ENCODE measurements at regions of chr1 and their contacts with region 1.

Region 1: GRCh38 chr1:71080739-71081696 is at the start of gene ZRANB2:
- DNase-seq: peak; percentile 97
- H3K4me3 Mint-ChIP-seq: peak within 1 kb of the TSS; percentile 97
- H3K27ac Mint-ChIP-seq: peak within 1 kb of the TSS; percentile 100
- H3K4me1 Mint-ChIP-seq: peaks cover 6% of the 10 kb centered on the region
- H3K27me3 Mint-ChIP-seq: peaks cover 11% of the 10 kb centered on the region
- CTCF ChIP-seq: peak; percentile 40
- total RNA-seq, gene ZRANB2: 134 and 164 TPM in 2 replicates

Region 2: DNA sequence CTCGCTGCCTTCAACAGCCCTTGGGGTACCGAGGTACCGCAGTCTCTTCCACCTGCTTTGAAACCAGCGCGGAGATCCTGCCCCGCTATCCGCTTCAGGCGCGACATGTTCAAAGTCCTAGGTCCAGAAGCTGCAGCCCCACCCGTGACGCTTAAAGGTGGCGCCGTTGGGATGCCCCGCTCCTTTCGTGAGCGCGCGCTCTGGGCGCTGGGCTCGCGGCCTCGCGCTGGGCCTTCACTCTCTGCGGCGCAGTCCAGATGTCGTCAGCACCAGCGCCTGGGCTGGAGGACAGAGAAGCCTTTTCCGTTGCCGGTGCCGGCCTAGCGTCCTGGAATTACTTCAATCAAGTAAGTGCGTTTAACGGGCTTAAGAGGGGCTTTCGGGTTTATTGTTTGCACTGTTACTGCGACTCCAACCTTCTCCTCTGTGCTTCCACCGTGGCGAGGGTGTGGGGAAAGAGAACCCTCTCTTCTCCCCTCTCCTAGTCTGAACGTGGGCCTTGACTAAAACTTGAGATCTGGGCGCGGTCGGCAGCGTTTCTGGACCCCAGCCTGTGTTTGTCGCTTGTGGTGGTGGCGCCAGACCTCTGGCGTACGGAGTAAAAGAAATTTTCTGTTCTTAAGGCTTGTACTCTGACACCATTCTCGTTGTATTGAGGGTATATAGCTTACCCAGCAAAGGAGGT is 875.4 kb before region 1 on chr1 and contains the start of gene LRRC40:
- CTCF ChIA-PET with region 1: no interaction called
- POLR2A ChIA-PET with region 1: interaction called, 12 read pairs
- intact Hi-C with region 1: no loop called
- DNase-seq: peak; percentile 94
- H3K4me3 Mint-ChIP-seq: peak within 1 kb of the TSS; percentile 80
- H3K27ac Mint-ChIP-seq: peak within 1 kb of the TSS; percentile 98
- H3K4me1 Mint-ChIP-seq: peaks cover 40% of the 10 kb centered on the region
- H3K27me3 Mint-ChIP-seq: no peaks in the 10 kb centered on the region
- CTCF ChIP-seq: no peak
- total RNA-seq, gene LRRC40: 14.7 and 14.9 TPM in 2 replicates

Region 3: GRCh38 chr1:71721532-71721931 is 640.5 kb after region 1 on chr1:
- CTCF ChIA-PET with region 1: no interaction called
- POLR2A ChIA-PET with region 1: no interaction called
- intact Hi-C with region 1: no loop called
- DNase-seq: no peak
- H3K4me3 Mint-ChIP-seq: no peak overlapping the region
- H3K27ac Mint-ChIP-seq: no peak overlapping the region
- H3K4me1 Mint-ChIP-seq: no peaks in the 10 kb centered on the region
- H3K27me3 Mint-ChIP-seq: peaks cover 15% of the 10 kb centered on the region
- CTCF ChIP-seq: no peak